ENCODE measurements at regions of chr16 and their contacts with region 1.

Region 1: DNA sequence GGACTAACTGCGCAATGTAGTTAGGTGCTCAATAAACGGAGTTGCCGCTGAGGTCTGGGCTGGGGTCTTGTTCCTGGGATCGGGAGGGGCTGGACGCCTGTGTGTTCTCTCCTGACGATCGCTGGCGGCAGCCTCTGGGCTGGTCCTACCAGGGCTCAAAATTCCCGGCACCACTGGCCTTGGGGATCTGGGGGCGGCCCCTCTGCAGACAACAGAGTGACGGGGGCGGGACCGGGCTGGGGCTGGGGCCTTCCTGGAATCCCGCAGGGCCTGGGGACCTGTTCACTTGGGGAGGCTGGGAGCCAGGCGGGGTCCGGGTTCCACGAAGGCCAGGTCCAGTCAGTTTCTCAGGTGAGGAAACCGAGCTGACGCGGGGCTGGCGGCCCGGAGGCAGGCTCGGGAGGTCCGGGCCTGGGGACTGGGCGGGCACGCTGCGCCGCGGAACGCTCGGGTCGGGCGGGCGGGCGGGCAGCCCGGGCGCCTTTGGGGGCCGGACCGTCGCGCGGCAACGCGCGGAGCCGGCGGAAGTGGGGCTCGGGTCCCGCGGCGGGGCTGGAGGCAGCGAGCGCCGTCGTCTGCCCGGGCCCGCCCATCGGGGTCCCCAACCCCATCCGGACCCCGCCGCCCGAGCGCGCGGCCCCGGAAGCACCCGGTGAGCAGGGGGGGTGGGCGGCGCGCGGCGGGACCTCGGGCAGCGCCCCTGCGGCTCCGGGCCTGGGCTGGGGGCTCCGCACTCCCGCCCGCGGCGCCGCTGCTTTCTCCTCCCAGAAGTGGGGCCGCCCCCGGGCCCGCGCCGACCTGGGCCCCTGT is at the start of gene PIGQ:
- DNase-seq: peak; percentile 70
- ATAC-seq: peak; percentile 70
- H3K4me3 ChIP-seq: peak within 1 kb of the TSS; percentile 88 to 97 (median 92)
- H3K27ac ChIP-seq: peak within 1 kb of the TSS; percentile 79
- H3K4me1 ChIP-seq: peaks cover 56% of the 10 kb centered on the region
- H3K27me3 ChIP-seq: peaks cover 4 to 17% of the 10 kb centered on the region in 2 experiments
- CTCF ChIP-seq: no peak
- EP300 ChIP-seq: no peak
- POLR2A ChIP-seq: peak in 1 of 2 experiments; percentile 41; a peak in 1 of 4 replicates
- RAD21 ChIP-seq: no peak
- total RNA-seq, gene PIGQ: 8.4 and 19.7 TPM in 2 replicates

Region 2: GRCh38 chr16:533391-534123 is 36.1 kb before region 1 on chr16:
- CTCF ChIA-PET with region 1: no interaction called
- POLR2A ChIA-PET with region 1: no interaction called
- in situ Hi-C with region 1: no loop called
- intact Hi-C with region 1: loop called (anchors 5 kb)
- DNase-seq: peak; percentile 77
- ATAC-seq: peak; percentile 88
- H3K4me3 ChIP-seq: peak overlapping the region; percentile 58 to 85 (median 66); a peak in 5 of 6 replicates
- H3K27ac ChIP-seq: peak overlapping the region; percentile 91
- H3K4me1 ChIP-seq: peaks cover 57% of the 10 kb centered on the region
- H3K27me3 ChIP-seq: no peaks in the 10 kb centered on the region
- CTCF ChIP-seq: peak; percentile 33; the same call in 1 of the 2 replicates
- EP300 ChIP-seq: 0 out of 4 replicates have a peak, but pooled peaks of 1 of the 2 experiments have one; percentile 7
- POLR2A ChIP-seq: peak in 1 of 2 experiments; percentile 65; a peak in 3 of 4 replicates
- RAD21 ChIP-seq: no peak; the same call in none of the 2 replicates

Region 3: GRCh38 chr16:558298-559020 is 11.2 kb before region 1 on chr16:
- CTCF ChIA-PET with region 1: no interaction called
- POLR2A ChIA-PET with region 1: interaction called, 10 read pairs
- in situ Hi-C with region 1: no loop called
- intact Hi-C with region 1: no loop called
- DNase-seq: peak; percentile 80
- ATAC-seq: peak; percentile 68
- H3K4me3 ChIP-seq: peak overlapping the region; percentile 5 to 67 (median 25); a peak in 4 of 6 replicates
- H3K27ac ChIP-seq: peak overlapping the region; percentile 43
- H3K4me1 ChIP-seq: peaks cover 76% of the 10 kb centered on the region
- H3K27me3 ChIP-seq: peaks cover 11 to 39% of the 10 kb centered on the region in 2 experiments; a peak in 4 of 5 replicates
- CTCF ChIP-seq: no peak
- EP300 ChIP-seq: peak in 1 of 2 experiments; percentile 40; a peak in 2 of 4 replicates
- POLR2A ChIP-seq: no peak
- RAD21 ChIP-seq: peak; percentile 24; the same call in 1 of the 2 replicates

Region 4: GRCh38 chr16:636206-637080 is 66.8 kb after region 1 on chr16 and contains the start of gene METTL26:
- CTCF ChIA-PET with region 1: no interaction called
- POLR2A ChIA-PET with region 1: no interaction called
- in situ Hi-C with region 1: no loop called
- intact Hi-C with region 1: no loop called
- DNase-seq: peak; percentile 92
- ATAC-seq: peak; percentile 80
- H3K4me3 ChIP-seq: peak within 1 kb of the TSS; percentile 90 to 94 (median 92)
- H3K27ac ChIP-seq: peak within 1 kb of the TSS; percentile 88
- H3K4me1 ChIP-seq: peaks cover 37% of the 10 kb centered on the region
- H3K27me3 ChIP-seq: no peaks in the 10 kb centered on the region
- CTCF ChIP-seq: peak; percentile 29; the same call in 1 of the 2 replicates
- EP300 ChIP-seq: no peak
- POLR2A ChIP-seq: peak; percentile 72 to 95
- RAD21 ChIP-seq: peak; percentile 69
- total RNA-seq, gene METTL26: 70.1 and 75.1 TPM in 2 replicates